Activated CD4-positive, alpha-beta T cell treated with anti-CD3 and anti-CD28 coated beads for 36 hours (primary cell): ENCODE measurements at regions of chr18 and their contacts with region 1.

Region 1: DNA sequence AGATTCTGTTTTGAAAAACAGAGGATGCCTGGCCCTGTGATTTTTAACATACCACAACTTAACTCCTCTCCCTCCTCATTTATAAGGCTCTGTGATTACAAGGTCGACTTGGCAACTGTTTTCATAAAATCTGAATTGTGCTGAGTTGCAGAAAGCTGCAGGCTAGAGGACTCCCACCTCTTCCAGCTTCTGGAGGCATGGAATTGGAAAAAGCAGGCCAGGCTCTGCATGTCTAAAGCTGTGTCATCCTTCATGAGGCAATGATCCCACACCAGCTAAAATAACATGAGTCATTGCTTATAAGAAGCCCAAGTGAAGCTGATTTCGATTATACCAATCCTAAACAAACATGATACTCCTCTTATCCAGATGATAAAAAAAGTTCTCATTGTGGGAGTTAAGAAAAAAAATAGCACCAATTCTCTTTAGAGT is 11.7 kb downstream of the ARHGAP28 start:
- DNase-seq: no peak
- ATAC-seq: no peak
- H3K4me3 Mint-ChIP-seq: no peak overlapping the region
- H3K27ac Mint-ChIP-seq: no peak overlapping the region
- H3K4me1 Mint-ChIP-seq: no peaks in the 10 kb centered on the region
- H3K27me3 Mint-ChIP-seq: peaks cover 2% of the 10 kb centered on the region

Region 2: DNA sequence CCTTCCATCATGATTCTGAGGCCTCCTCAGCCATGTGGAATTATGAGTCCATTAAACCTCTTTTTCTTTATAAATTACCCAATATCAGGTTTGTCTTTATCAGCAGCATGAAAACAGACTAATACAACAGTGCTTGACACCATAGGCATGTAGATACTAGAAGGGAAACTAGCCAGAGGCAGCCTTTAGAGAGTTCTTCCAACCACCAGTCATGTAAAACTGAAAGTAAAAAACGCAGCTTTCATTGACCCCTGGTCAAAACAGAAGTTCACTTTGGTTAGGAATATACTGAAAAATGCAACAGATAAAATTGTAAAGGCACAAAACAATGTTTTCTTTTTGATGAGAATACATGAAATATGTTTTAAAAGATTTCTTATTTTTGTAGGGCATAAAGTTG is 203.8 kb before region 1 on chr18:
- CTCF ChIA-PET with region 1: no interaction called
- POLR2A ChIA-PET with region 1: no interaction called
- intact Hi-C with region 1: no loop called
- DNase-seq: no peak
- ATAC-seq: no peak
- H3K4me3 Mint-ChIP-seq: no peak overlapping the region
- H3K27ac Mint-ChIP-seq: no peak overlapping the region
- H3K4me1 Mint-ChIP-seq: no peaks in the 10 kb centered on the region
- H3K27me3 Mint-ChIP-seq: peaks cover 10% of the 10 kb centered on the region

Region 3: GRCh38 chr18:6666012-6666685 is 75.1 kb before region 1 on chr18:
- CTCF ChIA-PET with region 1: no interaction called
- POLR2A ChIA-PET with region 1: no interaction called
- intact Hi-C with region 1: no loop called
- DNase-seq: no peak
- ATAC-seq: no peak
- H3K4me3 Mint-ChIP-seq: no peak overlapping the region
- H3K27ac Mint-ChIP-seq: no peak overlapping the region
- H3K4me1 Mint-ChIP-seq: no peaks in the 10 kb centered on the region
- H3K27me3 Mint-ChIP-seq: peaks cover 2% of the 10 kb centered on the region

Region 4: GRCh38 chr18:6722690-6723089 is 18.6 kb before region 1 on chr18:
- CTCF ChIA-PET with region 1: no interaction called
- POLR2A ChIA-PET with region 1: no interaction called
- intact Hi-C with region 1: no loop called
- DNase-seq: no peak
- ATAC-seq: no peak
- H3K4me3 Mint-ChIP-seq: no peak overlapping the region
- H3K27ac Mint-ChIP-seq: no peak overlapping the region
- H3K4me1 Mint-ChIP-seq: no peaks in the 10 kb centered on the region
- H3K27me3 Mint-ChIP-seq: peaks cover 5% of the 10 kb centered on the region

Region 5: GRCh38 chr18:6795307-6795706 is 54.1 kb after region 1 on chr18:
- CTCF ChIA-PET with region 1: no interaction called
- POLR2A ChIA-PET with region 1: no interaction called
- intact Hi-C with region 1: no loop called
- DNase-seq: no peak
- ATAC-seq: no peak
- H3K4me3 Mint-ChIP-seq: no peak overlapping the region
- H3K27ac Mint-ChIP-seq: no peak overlapping the region
- H3K4me1 Mint-ChIP-seq: no peaks in the 10 kb centered on the region
- H3K27me3 Mint-ChIP-seq: no peaks in the 10 kb centered on the region

Region 6: GRCh38 chr18:6811816-6812215 is 70.6 kb after region 1 on chr18:
- CTCF ChIA-PET with region 1: no interaction called
- POLR2A ChIA-PET with region 1: no interaction called
- intact Hi-C with region 1: loop called in 1 of 2 experiments (anchors 10 kb)
- DNase-seq: no peak
- ATAC-seq: no peak
- H3K4me3 Mint-ChIP-seq: no peak overlapping the region
- H3K27ac Mint-ChIP-seq: no peak overlapping the region
- H3K4me1 Mint-ChIP-seq: no peaks in the 10 kb centered on the region
- H3K27me3 Mint-ChIP-seq: no peaks in the 10 kb centered on the region